ENCODE measurements at regions of chr1 and their contacts with region 1.

Region 1: GRCh38 chr1:52927212-52928014 is at the start of gene SCP2:
- DNase-seq: peak; percentile 86 to 90
- ATAC-seq: peak; percentile 94 to 97 (median 96)
- H3K4me3 ChIP-seq: peak within 1 kb of the TSS; percentile 55 to 85 (median 78)
- H3K27ac ChIP-seq: peak within 1 kb of the TSS; percentile 76 to 90 (median 87)
- H3K4me1 ChIP-seq: peaks cover 5 to 30% (median 23%) of the 10 kb centered on the region in 9 donors
- H3K27me3 ChIP-seq: peaks cover 0 to 2% (median 0%) of the 10 kb centered on the region in 7 donors
- CTCF ChIP-seq: no peak
- total RNA-seq, gene SCP2: 117 to 149 (median 133) TPM

Region 2: DNA sequence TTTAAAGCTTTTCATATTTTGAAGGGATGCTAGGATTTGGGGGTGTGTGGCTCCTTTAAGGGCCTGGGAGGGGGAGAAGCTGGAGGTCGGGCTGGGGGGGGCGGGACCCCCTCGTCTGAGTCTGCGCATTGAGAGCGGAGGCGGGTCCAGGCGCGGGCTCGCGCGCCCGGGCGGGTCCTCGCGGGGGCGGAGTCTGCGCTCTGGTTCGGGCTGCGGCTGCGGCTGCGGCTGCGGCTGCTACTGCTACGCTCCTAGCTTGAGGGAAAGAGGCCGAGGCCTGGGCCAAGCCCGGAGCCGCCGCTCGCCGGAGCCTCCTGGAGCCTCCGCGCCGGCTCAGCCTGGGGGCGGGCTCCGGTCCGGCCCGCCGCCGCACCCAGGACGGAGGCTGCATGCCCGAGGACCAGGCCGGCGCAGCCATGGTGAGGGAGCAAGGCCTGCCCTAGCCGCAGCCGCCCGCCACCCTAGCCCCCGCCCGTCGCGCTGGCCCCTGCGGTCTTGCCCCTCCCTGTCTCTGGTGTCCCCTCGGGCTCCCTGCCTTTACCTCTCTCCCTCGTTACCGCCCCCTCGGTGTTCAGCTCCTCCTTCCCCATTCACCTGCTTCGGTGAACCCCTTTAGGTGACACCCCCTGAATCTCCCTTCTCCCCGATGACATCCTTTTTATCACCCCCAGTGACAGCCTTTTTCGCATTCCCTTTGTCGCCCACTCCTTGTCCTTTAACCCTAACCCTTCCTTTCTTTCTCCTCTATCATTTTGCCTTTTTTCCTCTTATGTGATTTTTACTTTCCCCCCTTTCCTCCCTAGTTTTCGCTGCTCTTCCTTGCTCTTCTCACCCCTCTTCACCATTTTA is 200.9 kb before region 1 on chr1 and contains the start of gene ZYG11B:
- intact Hi-C with region 1: loop called in 1 of 10 experiments (anchors 10 kb)
- DNase-seq: peak; percentile 91 to 93
- ATAC-seq: peak; percentile 92 to 99 (median 98)
- H3K4me3 ChIP-seq: peak within 1 kb of the TSS; percentile 75 to 94 (median 91)
- H3K27ac ChIP-seq: peak within 1 kb of the TSS; percentile 72 to 96 (median 93)
- H3K4me1 ChIP-seq: peaks cover 7 to 41% (median 21%) of the 10 kb centered on the region in 9 donors
- H3K27me3 ChIP-seq: no peaks in the 10 kb centered on the region
- CTCF ChIP-seq: peak in 1 of 9 donors; percentile 13
- total RNA-seq, gene ZYG11B: 48.6 to 84.3 (median 66.3) TPM

Region 3: GRCh38 chr1:52842643-52843309 is 84.6 kb before region 1 on chr1 and contains the start of gene ZYG11A:
- intact Hi-C with region 1: no loop called
- DNase-seq: peak; percentile 38 to 58
- ATAC-seq: peak; percentile 70 to 95 (median 88)
- H3K4me3 ChIP-seq: peak within 1 kb of the TSS; percentile 19 to 56 (median 46)
- H3K27ac ChIP-seq: no peak within 1 kb of the TSS
- H3K4me1 ChIP-seq: peaks cover 0 to 14% (median 10%) of the 10 kb centered on the region in 9 donors
- H3K27me3 ChIP-seq: peaks cover 0 to 58% (median 43%) of the 10 kb centered on the region in 7 donors
- CTCF ChIP-seq: peak in 7 of 9 donors; percentile 11 to 47 (median 40)
- total RNA-seq, gene ZYG11A: 0.07 TPM in 1 of 10 donors, not detected in the others

Measured in heart right ventricle (tissue), 16 donors.